Activated CD8-positive, alpha-beta T cell treated with anti-CD3 and anti-CD28 coated beads, Interleukin-2, amount 10 ng/mL, durations not matched to agents 7 days and 5 days (primary cell): ENCODE measurements at regions of chr3 and their contacts with region 1.

Region 1: DNA sequence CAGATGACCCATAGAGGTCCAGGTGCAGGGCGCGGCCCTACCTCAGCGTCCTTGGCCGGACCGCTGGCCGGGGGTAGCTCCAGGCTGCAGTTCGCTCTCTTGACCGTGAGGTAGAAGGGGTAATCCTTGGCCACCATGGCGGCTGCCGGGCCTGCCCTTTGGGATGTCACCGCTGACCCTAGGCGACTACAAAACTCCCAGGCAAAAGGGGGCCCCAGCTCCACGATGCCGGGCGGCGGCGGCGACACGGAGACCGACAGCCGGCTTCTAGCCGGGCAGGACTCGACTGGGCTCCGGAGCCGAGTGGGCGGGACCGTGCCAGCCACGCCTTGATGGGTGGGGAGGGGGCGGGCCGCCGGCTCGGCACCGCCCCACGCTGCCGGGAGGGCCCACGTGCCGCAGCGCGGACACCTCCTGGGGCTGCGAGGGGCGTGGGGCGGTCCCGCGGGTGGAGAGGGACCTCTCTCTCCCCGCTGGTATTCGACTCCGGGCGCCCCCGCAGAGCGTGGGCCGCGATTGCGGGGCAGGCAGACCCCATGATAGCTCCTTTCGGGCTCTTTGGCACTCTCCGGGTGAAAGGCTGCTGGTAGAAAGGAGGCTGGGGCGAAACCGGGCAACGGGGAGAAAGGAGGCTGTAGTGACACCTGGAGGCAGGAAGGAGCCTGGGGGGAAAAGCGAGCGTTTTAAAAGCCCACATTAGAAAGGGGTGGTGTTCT is at the start of gene ARHGEF3:
- DNase-seq: peak; percentile 89
- ATAC-seq: peak; percentile 84
- H3K4me3 Mint-ChIP-seq: peak within 1 kb of the TSS; percentile 83
- H3K27ac Mint-ChIP-seq: peak within 1 kb of the TSS; percentile 84
- H3K4me1 Mint-ChIP-seq: peaks cover 28% of the 10 kb centered on the region
- H3K27me3 Mint-ChIP-seq: no peaks in the 10 kb centered on the region
- total RNA-seq, gene ARHGEF3: 94.6 to 101 TPM

Region 2: DNA sequence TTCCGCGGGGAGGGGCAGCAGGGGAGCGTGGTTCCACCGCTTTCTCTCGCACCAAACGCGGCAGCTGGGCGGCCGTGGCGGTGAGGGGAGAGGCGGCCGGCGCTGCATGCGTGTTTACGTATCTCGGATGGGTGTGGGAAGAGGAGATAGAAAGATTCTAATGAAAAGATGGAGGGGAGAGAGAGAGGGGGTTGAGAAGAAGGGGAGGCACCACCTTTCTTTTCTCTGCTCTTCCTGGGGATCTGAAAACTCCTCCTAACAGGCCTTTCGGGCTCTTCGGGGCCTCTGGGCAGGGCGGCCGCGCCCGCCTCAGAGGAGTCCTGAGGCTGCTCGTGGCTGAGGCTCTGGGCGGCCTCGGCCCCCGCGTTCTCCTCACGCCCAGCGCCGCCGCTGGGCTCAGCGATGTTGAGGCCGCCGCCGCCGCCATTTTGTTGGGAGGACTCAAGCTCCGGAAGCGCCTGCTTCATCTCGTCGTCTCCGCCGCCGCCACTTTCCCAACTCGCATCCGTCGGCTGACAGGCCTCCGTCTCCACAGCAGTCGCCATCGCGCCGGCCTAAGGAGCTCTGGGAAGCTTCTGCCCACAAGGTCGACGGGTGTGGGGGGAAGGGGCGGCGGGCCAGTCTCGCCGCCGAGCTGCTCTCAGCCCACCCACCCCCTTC is 119.2 kb before region 1 on chr3:
- CTCF ChIA-PET with region 1: interaction called, 14 read pairs
- POLR2A ChIA-PET with region 1: interaction called, 39 read pairs
- DNase-seq: peak; percentile 87
- ATAC-seq: peak; percentile 81
- H3K4me3 Mint-ChIP-seq: peak overlapping the region; percentile 96
- H3K27ac Mint-ChIP-seq: peak overlapping the region; percentile 97
- H3K4me1 Mint-ChIP-seq: peaks cover 34% of the 10 kb centered on the region
- H3K27me3 Mint-ChIP-seq: no peaks in the 10 kb centered on the region

Region 3: DNA sequence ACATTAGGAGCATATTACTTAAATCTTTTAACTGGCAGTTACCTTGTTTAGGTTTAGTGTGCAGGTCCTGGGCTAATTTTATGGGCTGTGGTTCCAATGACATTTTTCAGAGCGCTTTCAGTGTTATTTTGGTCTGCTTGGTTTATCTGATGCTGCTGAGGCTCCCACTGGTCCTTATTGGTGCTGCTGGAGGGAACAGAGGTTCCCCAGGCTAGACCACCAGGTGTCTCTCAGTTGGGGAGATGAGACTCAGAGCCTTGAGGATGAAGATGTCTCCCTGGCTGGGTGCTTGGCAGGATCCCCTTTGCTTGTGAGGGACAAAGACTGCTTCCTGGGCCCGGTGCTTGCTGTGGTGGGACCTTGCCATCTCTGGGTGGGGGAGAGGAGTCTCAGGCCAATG is 90.5 kb before region 1 on chr3:
- CTCF ChIA-PET with region 1: interaction called, 278 read pairs
- POLR2A ChIA-PET with region 1: interaction called, 7 read pairs
- DNase-seq: no peak
- ATAC-seq: no peak
- H3K4me3 Mint-ChIP-seq: no peak overlapping the region
- H3K27ac Mint-ChIP-seq: no peak overlapping the region
- H3K4me1 Mint-ChIP-seq: peaks cover 16% of the 10 kb centered on the region
- H3K27me3 Mint-ChIP-seq: no peaks in the 10 kb centered on the region

Region 4: GRCh38 chr3:56758539-56758981 is 43.3 kb before region 1 on chr3:
- CTCF ChIA-PET with region 1: interaction called, 242 read pairs
- POLR2A ChIA-PET with region 1: interaction called, 98 read pairs
- DNase-seq: peak; percentile 58
- ATAC-seq: peak; percentile 68
- H3K4me3 Mint-ChIP-seq: peak overlapping the region; percentile 29
- H3K27ac Mint-ChIP-seq: peak overlapping the region; percentile 86
- H3K4me1 Mint-ChIP-seq: peaks cover 85% of the 10 kb centered on the region
- H3K27me3 Mint-ChIP-seq: no peaks in the 10 kb centered on the region

Region 5: DNA sequence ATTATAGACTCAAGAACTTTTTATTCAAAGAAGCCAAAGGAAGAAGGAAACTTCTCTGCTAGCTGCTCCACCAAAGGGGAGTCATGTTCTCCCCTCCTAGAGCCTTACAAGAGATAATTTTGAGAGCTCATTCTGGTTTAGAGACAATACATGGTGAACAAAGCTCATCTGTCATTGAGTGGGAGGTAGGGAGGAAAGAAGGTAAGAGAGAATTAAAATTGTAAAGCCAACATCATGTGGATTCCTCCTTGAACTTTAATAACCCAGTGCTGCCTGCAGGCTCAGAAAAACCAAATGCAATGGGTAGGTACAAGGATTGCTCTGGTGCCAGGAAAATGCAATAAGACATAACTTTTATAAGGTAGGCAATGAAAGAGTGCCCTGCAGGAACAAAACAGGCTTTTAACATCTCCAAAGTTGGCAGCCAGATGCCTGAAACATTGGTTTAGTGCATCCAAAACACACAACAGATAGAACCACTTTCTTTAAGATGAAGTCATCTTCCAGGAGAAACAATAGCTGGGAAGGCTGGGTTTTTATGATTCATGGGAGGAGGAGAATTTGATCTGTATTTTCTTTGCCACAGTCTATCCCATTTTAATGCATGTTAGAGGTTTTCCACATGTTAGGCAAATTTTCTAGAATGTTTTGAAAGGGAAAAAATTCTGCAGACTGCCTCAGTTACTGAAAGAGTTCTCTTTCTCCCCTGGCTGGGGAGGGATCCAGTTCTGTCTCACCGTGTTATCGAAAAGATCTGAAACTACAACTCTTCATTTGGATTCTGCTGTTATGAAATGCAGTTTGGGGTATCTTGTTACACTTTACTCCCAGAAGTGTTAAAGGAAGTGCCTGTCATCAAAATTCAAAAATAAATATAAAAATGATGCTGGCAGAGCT is 11.2 kb after region 1 on chr3:
- CTCF ChIA-PET with region 1: interaction called, 24 read pairs
- POLR2A ChIA-PET with region 1: interaction called, 10 read pairs
- DNase-seq: no peak
- ATAC-seq: no peak
- H3K4me3 Mint-ChIP-seq: peak overlapping the region; percentile 2
- H3K27ac Mint-ChIP-seq: peak overlapping the region; percentile 40
- H3K4me1 Mint-ChIP-seq: peaks cover 48% of the 10 kb centered on the region
- H3K27me3 Mint-ChIP-seq: no peaks in the 10 kb centered on the region

Region 6: DNA sequence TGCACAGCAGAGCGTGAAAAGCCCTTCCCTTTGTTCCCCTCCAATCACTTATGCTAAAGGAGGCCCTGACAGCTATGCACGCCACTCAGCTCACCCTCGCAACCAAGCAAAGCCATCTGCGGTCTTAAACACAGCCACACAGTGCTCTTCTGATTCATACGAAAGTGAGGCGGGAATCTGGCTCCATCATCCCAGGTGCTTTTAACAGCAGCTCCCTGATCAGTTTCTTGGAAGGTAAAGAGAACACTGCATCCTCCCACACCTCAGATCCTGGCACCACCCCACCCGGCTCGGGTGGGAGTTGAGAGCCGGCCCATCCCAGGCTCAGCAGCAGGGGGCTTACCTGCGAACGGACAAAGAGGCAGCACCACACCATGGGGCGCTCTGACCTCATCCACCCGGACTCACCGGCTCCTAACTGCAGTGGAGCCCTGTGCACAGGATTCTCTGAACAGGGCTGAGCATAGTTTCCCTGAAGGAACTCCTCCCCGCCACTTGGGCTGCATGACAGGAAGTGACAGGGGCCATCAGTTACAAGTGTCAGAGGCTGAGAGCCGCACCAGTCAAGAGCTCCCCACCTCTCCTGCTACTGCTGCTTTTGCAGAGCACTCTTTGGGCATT is 114.3 kb after region 1 on chr3:
- CTCF ChIA-PET with region 1: interaction called, 95 read pairs
- POLR2A ChIA-PET with region 1: interaction called, 88 read pairs
- DNase-seq: peak; percentile 90
- ATAC-seq: peak; percentile 93
- H3K4me3 Mint-ChIP-seq: peak overlapping the region; percentile 92
- H3K27ac Mint-ChIP-seq: peak overlapping the region; percentile 99
- H3K4me1 Mint-ChIP-seq: peaks cover 63% of the 10 kb centered on the region
- H3K27me3 Mint-ChIP-seq: no peaks in the 10 kb centered on the region

Region 7: GRCh38 chr3:56988458-56989168 is 186.8 kb after region 1 on chr3:
- CTCF ChIA-PET with region 1: interaction called, 196 read pairs
- POLR2A ChIA-PET with region 1: interaction called, 19 read pairs
- DNase-seq: peak; percentile 83
- ATAC-seq: peak; percentile 67
- H3K4me3 Mint-ChIP-seq: no peak overlapping the region
- H3K27ac Mint-ChIP-seq: no peak overlapping the region
- H3K4me1 Mint-ChIP-seq: peaks cover 35% of the 10 kb centered on the region
- H3K27me3 Mint-ChIP-seq: peaks cover 20% of the 10 kb centered on the region

Region 8: DNA sequence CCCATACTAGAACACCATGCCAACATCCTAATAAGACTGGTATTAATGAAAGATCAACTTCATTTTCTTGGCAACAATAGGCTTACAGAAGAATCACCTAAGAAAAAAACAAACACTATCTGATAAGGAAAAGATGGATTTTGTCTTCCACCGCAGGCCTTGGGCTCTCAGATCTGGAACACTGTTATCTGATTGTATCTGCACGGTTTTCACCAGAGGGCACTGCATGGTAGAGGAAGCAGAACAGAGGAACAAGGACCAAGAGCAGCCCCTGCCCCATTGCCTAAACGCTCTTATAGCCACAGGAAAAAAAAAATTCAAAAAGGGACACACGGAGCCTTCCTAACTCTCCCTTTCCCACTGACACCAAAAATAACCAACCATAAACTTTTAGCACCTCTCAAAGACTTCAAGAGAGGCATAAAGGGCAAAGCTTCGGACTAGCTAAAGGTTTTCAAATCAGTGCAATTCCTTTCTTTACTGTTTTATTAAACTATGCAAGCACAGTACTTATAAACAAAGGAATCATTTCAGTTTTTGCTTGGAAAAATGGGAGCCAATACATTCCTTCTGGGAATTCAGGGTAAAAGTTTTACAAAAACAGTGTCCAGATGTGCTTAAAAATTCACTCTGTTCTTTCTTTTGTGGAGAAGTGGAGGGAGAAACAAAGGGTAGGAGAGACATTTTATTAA is 340.0 kb after region 1 on chr3:
- CTCF ChIA-PET with region 1: no interaction called
- POLR2A ChIA-PET with region 1: no interaction called
- DNase-seq: no peak
- ATAC-seq: no peak
- H3K4me3 Mint-ChIP-seq: no peak overlapping the region
- H3K27ac Mint-ChIP-seq: no peak overlapping the region
- H3K4me1 Mint-ChIP-seq: no peaks in the 10 kb centered on the region
- H3K27me3 Mint-ChIP-seq: peaks cover 39% of the 10 kb centered on the region